ENCODE measurements at regions of chr15 and their contacts with region 1.

Region 1: DNA sequence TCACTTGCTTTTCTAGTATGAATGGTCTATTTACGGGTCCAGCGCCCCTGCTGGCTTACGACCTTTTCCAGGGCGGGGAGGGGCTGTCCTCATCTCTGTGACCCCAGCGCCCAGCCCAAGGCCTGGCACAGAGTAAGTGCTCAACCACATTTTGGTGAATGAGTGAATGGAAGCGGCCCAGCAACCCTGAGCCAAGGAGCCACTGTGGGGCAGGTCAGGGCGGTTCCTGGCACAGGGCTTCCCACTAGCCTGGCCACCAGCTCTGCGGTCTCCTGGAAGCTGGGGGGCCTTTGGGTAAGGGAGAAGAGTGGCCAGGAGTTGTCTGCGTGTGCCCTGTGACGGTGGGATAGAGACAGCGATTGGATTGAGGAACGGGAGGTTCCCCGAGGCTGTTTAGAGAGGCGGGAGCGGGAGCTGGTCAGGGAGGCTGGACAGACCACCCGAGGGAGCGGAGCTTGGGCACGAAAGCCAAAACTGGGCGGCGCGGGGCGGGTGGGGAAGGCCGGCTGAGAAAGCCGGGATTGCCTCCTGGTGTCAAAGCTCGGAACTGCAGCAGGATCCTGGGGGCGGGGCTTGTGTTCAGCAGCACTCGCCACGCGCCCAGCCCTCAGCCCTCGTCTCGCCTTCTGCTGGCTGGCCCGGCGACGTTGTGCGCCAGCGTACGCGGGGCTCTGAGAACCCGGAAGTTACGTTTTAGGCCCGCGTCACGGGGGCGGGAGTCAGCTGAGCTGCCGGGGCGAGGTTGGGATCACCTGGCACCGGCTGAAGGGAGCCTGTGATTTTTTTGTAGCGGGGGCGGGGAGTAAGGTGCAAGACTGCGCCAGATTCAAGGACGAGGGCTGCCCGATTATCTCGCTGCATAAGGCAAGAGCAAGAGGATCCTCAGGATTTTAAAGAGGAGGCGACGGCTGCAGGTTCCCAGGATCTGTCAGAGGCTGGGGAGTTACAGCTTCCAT is at the start of gene VPS18:
- DNase-seq: peak; percentile 99
- ATAC-seq: peak; percentile 98
- H3K4me3 Mint-ChIP-seq: peak within 1 kb of the TSS; percentile 100
- H3K27ac Mint-ChIP-seq: peak within 1 kb of the TSS; percentile 98
- H3K4me1 Mint-ChIP-seq: peaks cover 42% of the 10 kb centered on the region
- H3K27me3 Mint-ChIP-seq: peaks cover 13% of the 10 kb centered on the region
- total RNA-seq, gene VPS18: 17.8 to 18.4 TPM

Region 2: GRCh38 chr15:40684381-40684780 is 209.6 kb before region 1 on chr15:
- CTCF ChIA-PET with region 1: interaction called, 11 read pairs
- POLR2A ChIA-PET with region 1: no interaction called
- DNase-seq: no peak
- ATAC-seq: no peak
- H3K4me3 Mint-ChIP-seq: no peak overlapping the region
- H3K27ac Mint-ChIP-seq: no peak overlapping the region
- H3K4me1 Mint-ChIP-seq: no peaks in the 10 kb centered on the region
- H3K27me3 Mint-ChIP-seq: no peaks in the 10 kb centered on the region

Region 3: DNA sequence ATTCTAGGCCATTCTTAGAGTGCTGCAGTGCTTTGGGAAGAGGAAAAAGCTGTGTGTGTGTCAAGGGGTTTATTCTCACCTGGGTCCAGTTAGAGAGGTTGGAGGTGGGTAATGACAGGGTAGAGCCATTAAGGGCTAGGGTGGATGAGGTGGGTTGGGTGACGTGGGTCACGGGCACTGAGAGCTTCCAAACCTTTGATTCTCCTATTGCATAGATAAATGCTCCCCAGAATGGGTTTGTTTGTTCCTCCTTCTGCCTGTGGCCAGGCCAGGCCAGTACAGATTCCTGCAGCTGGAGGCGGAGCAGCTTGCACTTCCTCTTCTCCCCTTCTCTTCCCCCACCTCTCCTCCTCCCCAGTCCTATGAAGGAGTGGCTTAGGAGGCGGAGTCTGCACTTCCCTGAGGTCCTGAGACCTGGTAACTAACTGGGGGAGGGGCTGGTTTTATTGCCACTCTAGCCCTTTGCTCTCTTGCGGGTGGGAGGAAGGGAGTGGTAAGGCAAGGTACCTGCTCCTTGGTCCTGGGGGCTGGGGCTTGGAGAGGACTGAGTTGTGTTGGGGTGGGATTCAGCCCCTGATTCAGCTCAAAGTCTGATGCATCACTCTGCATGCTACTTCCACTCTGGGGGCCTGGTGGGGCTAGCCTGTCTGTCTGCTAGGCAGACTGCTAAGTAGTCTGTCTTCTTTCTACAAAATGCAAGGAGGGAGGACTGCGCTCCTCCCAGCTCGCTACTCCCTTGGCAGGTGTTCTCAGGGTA is 46.6 kb before region 1 on chr15:
- CTCF ChIA-PET with region 1: interaction called, 18 read pairs
- POLR2A ChIA-PET with region 1: interaction called, 4 read pairs
- DNase-seq: no peak
- ATAC-seq: no peak
- H3K4me3 Mint-ChIP-seq: no peak overlapping the region
- H3K27ac Mint-ChIP-seq: no peak overlapping the region
- H3K4me1 Mint-ChIP-seq: peaks cover 28% of the 10 kb centered on the region
- H3K27me3 Mint-ChIP-seq: peaks cover 16% of the 10 kb centered on the region

Region 4: GRCh38 chr15:40873625-40874561 is 20.1 kb before region 1 on chr15 and contains the start of gene RHOV:
- CTCF ChIA-PET with region 1: interaction called, 20 read pairs
- POLR2A ChIA-PET with region 1: interaction called, 4 read pairs
- DNase-seq: peak; percentile 53
- ATAC-seq: peak; percentile 91
- H3K4me3 Mint-ChIP-seq: peak within 1 kb of the TSS; percentile 63
- H3K27ac Mint-ChIP-seq: no peak within 1 kb of the TSS
- H3K4me1 Mint-ChIP-seq: peaks cover 13% of the 10 kb centered on the region
- H3K27me3 Mint-ChIP-seq: peaks cover 29% of the 10 kb centered on the region
- total RNA-seq, gene RHOV: not detected

Region 5: DNA sequence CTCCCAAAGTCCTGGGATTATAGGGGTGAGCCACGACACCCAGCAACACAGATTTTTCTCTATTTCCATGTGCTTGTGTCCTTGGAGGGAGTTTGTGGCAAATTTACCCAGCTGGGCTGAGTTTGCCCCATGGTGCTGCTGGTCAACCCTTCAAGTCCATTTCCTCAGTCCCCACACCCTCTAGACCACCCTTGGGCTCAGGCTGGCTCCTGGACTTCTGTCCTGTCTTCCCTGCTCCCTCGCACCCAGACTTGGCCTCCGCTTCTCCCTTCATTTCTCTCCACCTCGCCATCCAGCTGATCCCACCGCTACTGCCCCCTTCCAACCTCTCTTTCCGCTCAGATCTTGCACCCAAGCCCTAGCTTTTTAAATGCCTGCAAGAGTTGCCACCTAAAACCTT is 12.7 kb before region 1 on chr15:
- CTCF ChIA-PET with region 1: interaction called, 28 read pairs
- POLR2A ChIA-PET with region 1: interaction called, 3 read pairs
- DNase-seq: no peak
- ATAC-seq: no peak
- H3K4me3 Mint-ChIP-seq: no peak overlapping the region
- H3K27ac Mint-ChIP-seq: no peak overlapping the region
- H3K4me1 Mint-ChIP-seq: peaks cover 33% of the 10 kb centered on the region
- H3K27me3 Mint-ChIP-seq: peaks cover 10% of the 10 kb centered on the region

Measured in activated CD8-positive, alpha-beta T cell treated with anti-CD3 and anti-CD28 coated beads, Interleukin-2, amount 10 ng/mL, durations not matched to agents 7 days and 5 days (primary cell).